ENCODE measurements at regions of chr20 and their contacts with region 1.

Region 1: GRCh38 chr20:50635667-50636503 is 55.5 kb downstream of the RIPOR3 start:
- DNase-seq: peak; percentile 93
- ATAC-seq: peak; percentile 78
- H3K4me3 Mint-ChIP-seq: peak overlapping the region; percentile 42
- H3K27ac Mint-ChIP-seq: peak overlapping the region; percentile 86
- H3K4me1 Mint-ChIP-seq: peaks cover 53% of the 10 kb centered on the region
- H3K27me3 Mint-ChIP-seq: no peaks in the 10 kb centered on the region
- CTCF ChIP-seq: peak; percentile 88

Region 2: DNA sequence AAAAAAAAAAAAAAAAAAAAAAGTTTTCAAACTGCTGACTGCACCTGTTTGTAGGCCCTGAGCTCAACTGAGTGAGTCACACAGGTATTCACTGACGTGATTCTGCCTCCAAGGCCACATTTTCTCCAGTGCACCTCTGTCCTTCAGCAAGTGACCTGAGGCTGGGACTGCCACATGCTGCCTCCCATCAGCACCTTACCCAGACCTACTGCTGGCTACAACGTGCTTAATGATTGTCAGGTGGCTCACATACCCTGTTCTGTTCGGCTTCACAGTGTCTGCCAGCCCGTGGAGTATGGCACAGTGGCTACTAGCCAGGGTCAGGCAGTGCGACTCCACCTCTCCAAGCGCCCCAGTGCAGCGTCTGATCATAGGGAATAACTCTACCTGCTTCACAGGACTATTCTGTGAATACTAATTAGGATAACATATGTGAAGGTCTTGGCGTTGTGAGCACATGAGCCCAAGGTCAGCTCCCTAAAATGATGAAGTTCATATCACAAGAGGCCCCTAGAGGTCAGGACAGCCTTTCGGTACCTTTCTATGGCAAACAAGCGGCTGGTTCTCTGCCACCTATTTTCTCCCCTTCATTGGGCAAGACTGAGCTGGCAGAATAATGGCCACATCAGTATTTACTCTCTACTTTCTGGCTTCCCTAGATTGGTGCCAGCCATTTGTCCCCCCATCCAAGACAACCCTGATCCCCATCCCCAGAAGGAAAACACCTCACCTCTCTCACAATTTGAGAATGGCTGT is 27.4 kb after region 1 on chr20:
- CTCF ChIA-PET with region 1: interaction called, 20 read pairs
- POLR2A ChIA-PET with region 1: no interaction called
- DNase-seq: no peak
- ATAC-seq: peak; percentile 68
- H3K4me3 Mint-ChIP-seq: no peak overlapping the region
- H3K27ac Mint-ChIP-seq: peak overlapping the region; percentile 38; the same call in 1 of the 2 replicates
- H3K4me1 Mint-ChIP-seq: peaks cover 34% of the 10 kb centered on the region
- H3K27me3 Mint-ChIP-seq: no peaks in the 10 kb centered on the region
- CTCF ChIP-seq: no peak

Region 3: GRCh38 chr20:50690634-50691572 is 55.0 kb after region 1 on chr20 and contains the start of gene RIPOR3:
- CTCF ChIA-PET with region 1: interaction called, 18 read pairs
- POLR2A ChIA-PET with region 1: interaction called, 4 read pairs
- DNase-seq: peak; percentile 49
- ATAC-seq: peak; percentile 46
- H3K4me3 Mint-ChIP-seq: peak within 1 kb of the TSS; percentile 78
- H3K27ac Mint-ChIP-seq: peak within 1 kb of the TSS; percentile 94
- H3K4me1 Mint-ChIP-seq: peaks cover 53% of the 10 kb centered on the region
- H3K27me3 Mint-ChIP-seq: no peaks in the 10 kb centered on the region
- CTCF ChIP-seq: no peak
- total RNA-seq, gene RIPOR3: 5.4 to 6.5 TPM (median 6.0 TPM) in 3 replicates

Region 4: DNA sequence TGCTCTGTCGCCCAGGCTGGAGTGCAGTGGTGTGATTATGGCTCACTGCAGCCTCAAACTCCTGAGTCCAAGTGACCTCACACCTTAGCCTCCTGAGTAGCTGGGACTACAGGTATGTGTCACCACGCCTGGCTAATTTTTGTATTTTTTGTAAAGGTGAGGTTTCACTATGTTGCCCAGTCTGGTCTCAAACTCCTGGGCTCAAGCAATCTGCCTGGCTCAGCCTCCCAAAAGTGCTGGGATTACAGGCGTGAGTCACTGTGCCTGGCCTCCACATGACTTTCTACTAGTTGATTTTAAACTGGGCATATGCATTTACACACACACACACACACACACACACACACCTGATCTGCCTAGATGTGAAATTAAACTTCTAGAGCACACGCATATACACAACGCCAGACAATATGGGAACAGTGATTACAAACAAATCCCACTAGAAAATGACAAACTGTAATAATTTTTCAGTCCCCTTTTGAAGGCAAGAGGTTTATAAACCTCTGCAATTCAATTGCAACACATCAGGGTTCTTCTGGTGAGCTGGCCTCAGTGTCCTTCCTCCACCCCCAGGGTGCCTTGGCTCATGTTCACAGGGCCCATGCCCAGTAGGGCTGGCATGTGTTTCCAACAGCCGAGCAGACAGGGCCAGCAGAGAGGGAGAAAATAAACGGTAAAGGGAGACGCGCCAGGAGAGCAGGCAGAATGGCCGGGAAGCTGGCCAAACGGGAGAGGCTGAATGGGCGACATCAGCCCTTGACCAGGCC is 126.7 kb after region 1 on chr20:
- CTCF ChIA-PET with region 1: interaction called, 14 read pairs
- POLR2A ChIA-PET with region 1: no interaction called
- DNase-seq: no peak
- ATAC-seq: no peak
- H3K4me3 Mint-ChIP-seq: no peak overlapping the region
- H3K27ac Mint-ChIP-seq: no peak overlapping the region; the same call in 1 of the 2 replicates
- H3K4me1 Mint-ChIP-seq: peaks cover 27% of the 10 kb centered on the region
- H3K27me3 Mint-ChIP-seq: no peaks in the 10 kb centered on the region
- CTCF ChIP-seq: no peak

Region 5: DNA sequence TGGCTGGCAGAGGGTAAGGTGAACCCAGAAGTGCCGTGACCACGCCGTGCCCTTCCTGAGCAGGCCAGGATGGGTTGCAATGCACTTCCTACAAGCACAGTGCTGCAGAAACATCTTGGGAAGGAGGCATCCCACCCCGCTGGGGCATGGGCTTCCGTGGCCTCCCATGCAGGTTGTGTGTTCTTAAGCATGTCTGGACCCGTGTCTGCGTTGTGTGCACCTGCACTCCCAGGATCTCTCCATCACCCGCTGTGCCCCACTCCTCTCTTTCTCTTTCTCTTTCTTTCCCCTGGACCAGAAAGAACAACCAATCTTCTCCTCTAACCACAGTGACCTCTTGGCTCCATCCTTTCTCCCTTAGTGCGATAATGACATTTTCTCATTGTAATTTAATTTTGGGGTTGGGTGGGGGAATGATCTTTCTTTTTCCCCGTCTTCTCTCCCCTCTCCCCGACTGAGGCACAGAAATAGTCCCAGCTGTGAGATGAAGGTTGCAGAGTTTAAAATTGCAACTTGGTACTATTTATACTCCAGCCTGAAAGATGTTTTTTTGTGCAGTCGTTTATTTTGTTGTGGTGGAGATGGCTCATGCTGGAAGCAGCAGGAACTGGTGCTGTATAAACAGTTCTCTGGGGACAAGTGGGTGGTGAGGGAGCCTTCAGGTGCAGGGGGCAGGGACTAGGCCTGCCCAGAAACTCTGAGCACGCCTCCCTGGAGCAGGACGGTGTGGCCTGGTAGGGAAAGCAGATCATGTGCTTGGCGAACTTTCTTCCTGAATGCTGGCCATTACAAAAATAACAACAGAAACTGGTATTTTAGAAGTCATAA is 179.5 kb after region 1 on chr20:
- CTCF ChIA-PET with region 1: no interaction called
- POLR2A ChIA-PET with region 1: no interaction called
- DNase-seq: no peak
- ATAC-seq: 0 out of 2 replicates have a peak, but pooled peaks have one; percentile 10
- H3K4me3 Mint-ChIP-seq: no peak overlapping the region
- H3K27ac Mint-ChIP-seq: peak overlapping the region; percentile 67
- H3K4me1 Mint-ChIP-seq: peaks cover 22% of the 10 kb centered on the region
- H3K27me3 Mint-ChIP-seq: no peaks in the 10 kb centered on the region; the same call in 1 of the 2 replicates
- CTCF ChIP-seq: no peak

Region 6: DNA sequence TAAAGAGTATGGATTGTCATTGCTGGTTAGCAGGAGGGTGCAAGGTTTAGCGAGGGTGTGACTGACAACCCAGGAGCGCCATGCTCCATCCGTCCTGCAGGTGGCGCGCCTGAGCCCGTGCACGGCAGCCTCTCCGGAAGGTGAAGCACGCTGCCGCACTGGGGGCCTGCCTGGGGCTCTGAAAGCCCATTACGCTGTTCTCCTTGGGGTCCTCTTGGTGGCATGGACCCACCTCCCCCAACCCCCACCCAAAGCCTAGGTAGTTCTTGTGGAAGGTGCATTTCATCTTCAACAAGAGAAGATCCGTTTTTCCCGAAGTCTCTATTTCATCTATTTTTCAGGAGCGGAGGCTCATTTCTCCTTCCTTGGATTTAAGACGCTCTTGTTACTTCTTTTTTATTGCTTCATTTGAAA is 584.4 kb after region 1 on chr20:
- CTCF ChIA-PET with region 1: no interaction called
- POLR2A ChIA-PET with region 1: no interaction called
- DNase-seq: peak; percentile 81
- ATAC-seq: peak; percentile 81
- H3K4me3 Mint-ChIP-seq: no peak overlapping the region
- H3K27ac Mint-ChIP-seq: no peak overlapping the region
- H3K4me1 Mint-ChIP-seq: peaks cover 35% of the 10 kb centered on the region
- H3K27me3 Mint-ChIP-seq: peaks cover 21% of the 10 kb centered on the region
- CTCF ChIP-seq: peak; percentile 96

Measured in WTC11 (cell line).